ENCODE measurements at regions of chr12 and their contacts with region 1.

Region 1: GRCh38 chr12:92208613-92209121 is 63.0 kb upstream of the BTG1 start:
- DNase-seq: peak; percentile 60 to 84 (median 64)
- H3K4me3 ChIP-seq: peak overlapping the region in 2 of 3 experiments; percentile 45 to 54
- H3K4me3 Mint-ChIP-seq: peak overlapping the region; percentile 64 to 77
- H3K27ac ChIP-seq: peak overlapping the region; percentile 71 to 85
- H3K27ac Mint-ChIP-seq: peak overlapping the region; percentile 84 to 94 (median 92)
- H3K4me1 ChIP-seq: peaks cover 30 to 32% of the 10 kb centered on the region in 2 donors
- H3K4me1 Mint-ChIP-seq: peaks cover 45% of the 10 kb centered on the region
- H3K27me3 ChIP-seq: no peaks in the 10 kb centered on the region
- H3K27me3 Mint-ChIP-seq: no peaks in the 10 kb centered on the region
- CTCF ChIP-seq: no peak

Region 2: DNA sequence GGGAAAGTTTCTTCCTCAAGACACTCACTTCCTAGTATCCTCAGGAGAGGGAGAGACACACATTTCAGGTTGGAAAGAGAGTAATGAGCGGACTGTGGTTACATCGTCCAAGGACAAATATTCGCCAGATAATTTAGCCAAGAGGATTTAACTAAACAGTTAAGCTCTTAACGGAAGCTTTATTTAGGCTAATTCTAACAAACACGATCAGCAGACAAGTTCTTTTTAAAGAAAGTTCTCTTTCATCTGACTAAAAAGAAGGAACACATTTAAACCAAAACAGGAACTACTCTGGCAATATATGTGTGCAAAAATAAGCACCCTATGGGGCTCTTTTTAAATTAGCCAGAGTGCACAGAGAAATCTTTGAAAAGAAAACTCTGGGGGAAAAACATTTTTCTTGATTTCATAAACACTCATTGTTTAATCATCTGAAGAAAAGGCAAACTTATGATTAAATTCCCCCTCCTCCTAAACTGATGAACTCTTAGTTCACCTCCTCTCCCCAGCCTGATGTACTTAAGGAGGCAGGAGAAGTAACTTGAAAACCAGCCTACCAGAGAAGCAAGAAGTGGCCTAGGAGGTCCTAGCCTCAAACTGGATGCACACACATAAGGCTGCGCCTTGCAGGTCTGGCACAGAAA is 49.7 kb before region 1 on chr12:
- intact Hi-C with region 1: loop called in 1 of 2 experiments (anchors 10 kb)
- DNase-seq: peak in 2 of 3 donors; percentile 24 to 60
- H3K4me3 ChIP-seq: peak overlapping the region; percentile 5 to 65 (median 58)
- H3K4me3 Mint-ChIP-seq: peak overlapping the region; percentile 58 to 87
- H3K27ac ChIP-seq: peak overlapping the region; percentile 69 to 82
- H3K27ac Mint-ChIP-seq: peak overlapping the region; percentile 81 to 96 (median 93)
- H3K4me1 ChIP-seq: peaks cover 41 to 66% of the 10 kb centered on the region in 2 donors
- H3K4me1 Mint-ChIP-seq: peaks cover 62% of the 10 kb centered on the region
- H3K27me3 ChIP-seq: no peaks in the 10 kb centered on the region
- H3K27me3 Mint-ChIP-seq: no peaks in the 10 kb centered on the region
- CTCF ChIP-seq: no peak

Region 3: DNA sequence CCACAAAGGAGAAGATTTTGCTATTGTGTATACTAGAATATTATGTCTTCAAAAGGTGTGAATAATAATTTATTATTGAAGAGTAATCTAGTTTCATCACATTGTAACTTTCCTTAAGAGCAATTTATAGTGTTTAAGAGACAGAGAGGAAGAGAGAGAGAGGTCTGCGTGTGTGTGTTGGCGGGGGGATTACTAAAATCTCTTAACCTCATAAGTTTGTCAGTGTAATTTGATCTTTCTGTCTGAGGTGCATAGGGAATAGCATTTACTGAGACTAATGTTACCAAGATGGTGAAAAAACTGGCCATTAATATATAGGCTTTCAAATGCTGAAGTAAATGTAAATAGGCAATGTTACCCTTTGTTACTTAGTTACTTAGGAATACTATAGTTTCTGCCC is 14.8 kb before region 1 on chr12:
- intact Hi-C with region 1: no loop called
- DNase-seq: no peak
- H3K4me3 ChIP-seq: no peak overlapping the region
- H3K4me3 Mint-ChIP-seq: no peak overlapping the region
- H3K27ac ChIP-seq: no peak overlapping the region
- H3K27ac Mint-ChIP-seq: no peak overlapping the region
- H3K4me1 ChIP-seq: peaks cover 11 to 14% of the 10 kb centered on the region in 2 donors
- H3K4me1 Mint-ChIP-seq: peaks cover 22% of the 10 kb centered on the region
- H3K27me3 ChIP-seq: no peaks in the 10 kb centered on the region
- H3K27me3 Mint-ChIP-seq: peaks cover 0 to 1% (median 0%) of the 10 kb centered on the region in 3 donors
- CTCF ChIP-seq: no peak

Region 4: GRCh38 chr12:92244036-92244435 is 35.4 kb after region 1 on chr12:
- intact Hi-C with region 1: no loop called
- DNase-seq: no peak
- H3K4me3 ChIP-seq: no peak overlapping the region
- H3K4me3 Mint-ChIP-seq: no peak overlapping the region
- H3K27ac ChIP-seq: no peak overlapping the region
- H3K27ac Mint-ChIP-seq: peak overlapping the region in 2 of 7 donors; percentile 9 to 66
- H3K4me1 ChIP-seq: no peaks in the 10 kb centered on the region
- H3K4me1 Mint-ChIP-seq: peaks cover 4% of the 10 kb centered on the region
- H3K27me3 ChIP-seq: no peaks in the 10 kb centered on the region
- H3K27me3 Mint-ChIP-seq: peaks cover 0 to 2% (median 2%) of the 10 kb centered on the region in 3 donors
- CTCF ChIP-seq: no peak

Measured in CD14-positive monocyte (primary cell).